ENCODE measurements at regions of chr1 and their contacts with region 1.

Region 1: DNA sequence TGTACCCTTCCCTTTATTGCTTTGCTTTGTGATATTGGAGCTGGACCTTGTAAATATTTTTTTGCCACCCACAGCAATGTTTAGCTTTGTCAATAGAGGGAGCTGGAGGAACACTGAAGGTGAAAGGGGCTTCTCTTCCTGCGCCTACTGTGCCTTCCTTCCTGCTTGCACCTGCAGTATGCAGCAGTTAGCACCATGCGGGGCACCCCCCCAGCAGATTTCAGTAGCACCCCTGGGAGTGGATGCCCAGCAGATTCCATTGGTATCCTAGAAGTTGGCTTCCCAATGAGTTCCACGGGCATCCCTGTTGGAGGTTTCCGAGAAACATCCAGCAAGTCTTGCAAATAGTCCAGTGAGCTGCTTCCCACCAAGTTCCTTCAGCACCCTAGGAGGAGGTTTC is 25.6 kb downstream of the S100A10 start:
- DNase-seq: no peak
- ATAC-seq: peak; percentile 71

Region 2: DNA sequence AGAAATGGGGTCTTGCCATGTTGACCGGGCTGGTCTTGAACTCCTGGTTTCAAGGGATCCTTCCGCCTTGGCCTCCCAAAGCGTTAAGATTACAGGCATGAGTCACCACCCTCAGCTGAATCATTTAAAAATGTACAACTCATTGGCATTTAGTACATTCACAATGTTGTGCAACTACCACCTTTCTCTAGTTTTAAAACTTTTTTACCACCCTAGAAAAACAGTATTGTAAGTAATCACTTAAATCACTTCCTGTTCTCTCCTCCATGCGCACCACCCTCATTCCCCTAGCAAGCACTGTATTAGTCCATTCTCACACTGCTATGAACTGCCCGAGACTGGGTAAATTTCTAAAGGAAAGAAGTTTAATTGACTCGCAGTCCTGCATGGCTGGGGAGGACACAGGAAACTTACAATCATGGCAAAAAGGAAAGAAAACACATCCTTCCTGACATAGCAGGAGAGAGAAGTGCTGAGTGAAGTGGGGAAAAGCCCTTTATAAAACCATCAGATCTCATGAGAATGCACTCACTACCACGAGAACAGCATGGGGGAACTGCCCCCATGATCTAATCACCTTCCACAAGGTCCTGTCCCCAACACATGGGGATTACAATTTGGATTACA is 100.2 kb before region 1 on chr1:
- intact Hi-C with region 1: no loop called
- DNase-seq: no peak
- ATAC-seq: no peak

Region 3: DNA sequence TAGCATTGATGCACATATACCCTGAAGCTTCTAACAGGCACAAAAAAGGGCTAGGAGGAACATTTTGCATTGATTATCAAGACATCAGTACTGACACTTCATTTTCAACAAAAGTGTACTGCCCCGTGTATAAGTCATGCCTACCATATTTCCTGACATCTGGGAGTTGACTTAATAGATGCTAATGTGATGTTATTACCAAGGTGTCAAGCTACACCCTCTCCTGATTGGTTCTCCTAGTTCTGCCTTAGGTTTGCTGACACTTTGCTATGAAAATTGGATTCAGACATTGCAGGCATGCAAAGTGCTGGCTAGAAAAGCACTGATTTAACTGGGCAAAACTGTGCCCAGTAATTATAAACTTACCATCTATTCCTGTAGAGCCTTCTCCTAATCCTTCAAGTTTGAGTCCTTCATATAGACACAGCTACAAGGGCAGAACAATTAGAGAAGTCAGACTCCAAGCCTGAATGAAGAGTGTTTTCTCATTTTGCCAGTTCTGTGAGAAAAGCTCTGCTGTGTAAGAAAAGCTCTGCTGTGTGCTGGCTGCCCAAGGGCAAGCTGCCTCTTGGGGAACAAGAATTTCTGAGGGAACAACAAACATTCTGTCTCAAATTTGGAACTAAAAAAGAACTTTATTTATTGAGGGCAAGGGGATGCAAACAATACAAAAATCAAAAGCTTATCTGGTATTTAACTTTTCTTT is 14.4 kb after region 1 on chr1:
- intact Hi-C with region 1: loop called (anchors 2 kb)
- DNase-seq: no peak
- ATAC-seq: no peak

Region 4: DNA sequence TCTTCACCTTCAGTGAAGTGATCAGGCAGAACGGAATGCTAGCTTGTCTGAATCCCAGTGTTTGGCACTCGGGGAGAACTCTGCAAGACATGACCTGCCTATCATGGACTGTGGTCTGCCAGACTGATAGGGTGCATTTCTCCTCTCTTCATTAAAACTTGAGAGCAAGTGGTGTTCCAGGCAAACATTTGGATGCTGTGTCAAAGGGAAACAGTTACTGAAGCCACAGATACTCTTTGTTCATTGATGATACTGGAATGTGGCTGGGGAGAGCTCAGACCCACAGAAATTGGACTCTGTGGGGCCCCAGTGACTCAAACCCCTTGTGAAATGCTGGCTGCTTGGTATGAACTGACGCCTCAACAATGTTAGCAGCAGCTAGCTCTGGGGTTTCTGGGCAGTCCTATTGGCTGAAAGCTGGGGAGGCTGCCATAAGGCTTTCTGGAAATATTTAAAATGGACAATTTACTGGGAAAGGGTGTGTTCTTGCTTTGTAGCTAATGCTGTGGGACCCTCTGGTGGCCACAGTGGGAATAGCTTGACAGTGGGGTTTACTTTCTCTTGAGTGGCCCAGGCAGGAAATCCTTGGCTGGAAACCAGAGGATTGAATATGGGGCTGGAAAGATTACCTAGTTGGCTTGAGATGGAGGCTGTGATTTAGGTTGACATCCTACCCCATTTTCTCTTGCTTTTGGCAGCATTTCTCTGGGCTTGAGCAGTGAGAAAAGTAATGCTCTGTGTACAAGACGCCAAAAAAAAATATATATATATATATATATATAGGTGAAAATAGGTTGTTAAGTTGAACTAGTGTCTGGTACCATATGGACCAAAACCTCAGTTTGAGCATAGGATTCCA is 33.6 kb after region 1 on chr1:
- intact Hi-C with region 1: loop called (anchors 2 kb)
- DNase-seq: peak; percentile 87
- ATAC-seq: peak; percentile 49